AG04449 (cell line): ENCODE measurements at regions of chr1 and their contacts with region 1.

Region 1: GRCh38 chr1:219990782-219991510 is 55.4 kb downstream of the EPRS1 start:
- DNase-seq: no peak
- H3K4me3 ChIP-seq: no peak overlapping the region
- CTCF ChIP-seq: peak; percentile 23

Region 2: DNA sequence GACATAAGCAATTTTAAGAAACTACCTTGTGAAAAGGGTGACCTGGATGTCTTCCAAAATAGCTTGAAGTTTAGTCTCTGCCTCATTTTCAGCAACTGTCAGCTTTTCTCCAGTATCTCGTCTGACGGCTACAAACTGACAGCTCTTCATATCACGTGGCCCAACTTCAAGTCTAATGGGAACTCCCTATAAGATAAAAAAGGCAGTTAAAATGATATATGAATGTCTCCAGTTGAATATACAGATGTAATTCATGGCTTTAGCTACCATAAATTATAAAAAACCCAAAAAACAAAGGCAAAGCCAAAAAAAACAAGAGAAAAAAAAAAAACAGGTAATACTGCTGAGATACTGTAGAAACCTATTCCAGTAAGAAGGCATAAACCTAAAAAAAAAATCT is 17.7 kb before region 1 on chr1:
- CTCF ChIA-PET with region 1: interaction called, 33 read pairs
- POLR2A ChIA-PET with region 1: interaction called, 3 read pairs
- DNase-seq: no peak
- H3K4me3 ChIP-seq: no peak overlapping the region
- CTCF ChIP-seq: no peak

Region 3: GRCh38 chr1:220013497-220013896 is 22.6 kb after region 1 on chr1:
- CTCF ChIA-PET with region 1: interaction called, 18 read pairs
- POLR2A ChIA-PET with region 1: interaction called, 3 read pairs
- DNase-seq: no peak
- H3K4me3 ChIP-seq: no peak overlapping the region
- CTCF ChIP-seq: no peak

Region 4: DNA sequence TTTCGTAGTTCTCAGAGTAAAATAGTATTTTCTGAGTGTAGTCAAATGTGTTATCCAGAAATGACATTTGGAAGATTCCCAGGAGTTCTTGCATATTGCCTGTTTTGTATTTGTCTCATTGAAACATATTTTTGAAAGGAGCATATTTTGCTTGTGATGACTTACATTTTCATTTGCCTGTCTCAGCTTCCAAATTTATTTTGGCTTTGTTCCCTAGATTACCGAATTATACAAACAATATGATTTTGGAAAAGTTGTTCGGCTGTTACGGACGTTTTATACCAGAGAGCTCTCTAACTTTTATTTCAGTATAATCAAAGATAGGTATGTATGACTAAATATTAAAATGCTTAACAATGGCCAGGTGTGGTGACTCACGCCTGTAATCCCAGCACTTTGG is 149.0 kb after region 1 on chr1:
- CTCF ChIA-PET with region 1: no interaction called
- POLR2A ChIA-PET with region 1: no interaction called
- DNase-seq: no peak
- H3K4me3 ChIP-seq: no peak overlapping the region
- CTCF ChIP-seq: no peak

Region 5: GRCh38 chr1:220300442-220301121 is 309.6 kb after region 1 on chr1:
- CTCF ChIA-PET with region 1: no interaction called
- POLR2A ChIA-PET with region 1: no interaction called
- DNase-seq: peak; percentile 77
- H3K4me3 ChIP-seq: peak overlapping the region; percentile 26
- CTCF ChIP-seq: no peak